ENCODE measurements at regions of chr2 and their contacts with region 1.

Region 1: GRCh38 chr2:20097879-20098714 is 46.7 kb upstream of the LAPTM4A start:
- DNase-seq: peak; percentile 89
- H3K4me3 ChIP-seq: no peak overlapping the region
- H3K27ac ChIP-seq: no peak overlapping the region
- H3K4me1 ChIP-seq: peaks cover 0 to 12% (median 8%) of the 10 kb centered on the region in 4 donors
- H3K27me3 ChIP-seq: no peaks in the 10 kb centered on the region
- CTCF ChIP-seq: peak; percentile 71 to 84 (median 82)
- EP300 ChIP-seq: no peak
- POLR2A ChIP-seq: no peak

Region 2: DNA sequence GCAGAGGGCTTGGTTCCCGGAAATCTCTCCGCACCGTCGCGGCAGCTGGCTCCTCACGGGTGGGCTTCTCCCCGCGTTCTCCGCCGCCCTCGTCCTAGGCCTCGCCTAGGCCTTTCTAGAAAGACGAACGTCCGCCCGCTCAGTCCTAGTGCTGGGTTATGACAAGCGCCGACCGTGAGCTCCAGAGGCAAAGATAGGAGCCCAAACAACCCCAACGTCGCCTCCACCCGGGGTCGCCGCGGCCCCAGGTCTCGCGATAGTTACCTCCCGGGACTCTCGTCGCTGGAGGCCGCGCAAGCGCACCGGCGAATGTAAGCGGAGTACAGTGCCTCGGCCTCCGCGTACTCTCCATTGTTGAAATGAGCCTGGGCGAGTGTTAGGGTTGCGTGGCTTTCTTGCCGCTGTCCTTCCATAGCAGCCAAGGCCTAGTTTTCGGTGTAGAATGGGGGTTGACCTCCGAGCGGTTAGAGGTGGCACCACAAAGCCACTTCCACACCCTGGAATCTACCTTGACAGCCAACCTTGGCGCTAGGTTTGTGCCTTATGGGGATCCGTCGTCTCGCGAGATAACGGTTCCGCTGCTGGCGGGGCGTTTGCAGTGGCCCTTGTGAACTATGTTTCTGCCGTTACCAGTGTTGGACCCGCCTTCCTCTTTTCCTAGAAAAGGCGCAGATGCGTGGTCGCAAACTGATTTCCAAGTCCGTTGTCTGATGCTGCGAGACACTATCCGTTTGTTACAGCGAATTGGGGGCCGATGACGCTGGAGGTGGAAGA is 196.5 kb before region 1 on chr2 and contains the start of gene TTC32:
- intact Hi-C with region 1: loop called (anchors 5 kb)
- DNase-seq: peak; percentile 97
- H3K4me3 ChIP-seq: peak within 1 kb of the TSS; percentile 70 to 98 (median 78)
- H3K27ac ChIP-seq: peak within 1 kb of the TSS; percentile 88 to 95 (median 94)
- H3K4me1 ChIP-seq: peaks cover 0 to 45% (median 42%) of the 10 kb centered on the region in 4 donors
- H3K27me3 ChIP-seq: no peaks in the 10 kb centered on the region
- CTCF ChIP-seq: no peak
- EP300 ChIP-seq: no peak
- POLR2A ChIP-seq: peak; percentile 77 to 82
- total RNA-seq, gene TTC32: 7.3 to 20.5 (median 12.8) TPM

Region 3: GRCh38 chr2:19955544-19956422 is 142.3 kb before region 1 on chr2:
- intact Hi-C with region 1: loop called (anchors 5 kb)
- DNase-seq: no peak
- H3K4me3 ChIP-seq: no peak overlapping the region
- H3K27ac ChIP-seq: no peak overlapping the region
- H3K4me1 ChIP-seq: no peaks in the 10 kb centered on the region
- H3K27me3 ChIP-seq: no peaks in the 10 kb centered on the region
- CTCF ChIP-seq: peak in 3 of 4 experiments; percentile 44 to 72 (median 52)
- EP300 ChIP-seq: no peak
- POLR2A ChIP-seq: no peak

Region 4: GRCh38 chr2:20015472-20016083 is 82.5 kb before region 1 on chr2:
- intact Hi-C with region 1: loop called (anchors 1 kb)
- DNase-seq: no peak
- H3K4me3 ChIP-seq: no peak overlapping the region
- H3K27ac ChIP-seq: no peak overlapping the region
- H3K4me1 ChIP-seq: peaks cover 0 to 17% (median 10%) of the 10 kb centered on the region in 4 donors
- H3K27me3 ChIP-seq: no peaks in the 10 kb centered on the region
- CTCF ChIP-seq: peak; percentile 18 to 59 (median 54)
- EP300 ChIP-seq: no peak
- POLR2A ChIP-seq: no peak

Region 5: DNA sequence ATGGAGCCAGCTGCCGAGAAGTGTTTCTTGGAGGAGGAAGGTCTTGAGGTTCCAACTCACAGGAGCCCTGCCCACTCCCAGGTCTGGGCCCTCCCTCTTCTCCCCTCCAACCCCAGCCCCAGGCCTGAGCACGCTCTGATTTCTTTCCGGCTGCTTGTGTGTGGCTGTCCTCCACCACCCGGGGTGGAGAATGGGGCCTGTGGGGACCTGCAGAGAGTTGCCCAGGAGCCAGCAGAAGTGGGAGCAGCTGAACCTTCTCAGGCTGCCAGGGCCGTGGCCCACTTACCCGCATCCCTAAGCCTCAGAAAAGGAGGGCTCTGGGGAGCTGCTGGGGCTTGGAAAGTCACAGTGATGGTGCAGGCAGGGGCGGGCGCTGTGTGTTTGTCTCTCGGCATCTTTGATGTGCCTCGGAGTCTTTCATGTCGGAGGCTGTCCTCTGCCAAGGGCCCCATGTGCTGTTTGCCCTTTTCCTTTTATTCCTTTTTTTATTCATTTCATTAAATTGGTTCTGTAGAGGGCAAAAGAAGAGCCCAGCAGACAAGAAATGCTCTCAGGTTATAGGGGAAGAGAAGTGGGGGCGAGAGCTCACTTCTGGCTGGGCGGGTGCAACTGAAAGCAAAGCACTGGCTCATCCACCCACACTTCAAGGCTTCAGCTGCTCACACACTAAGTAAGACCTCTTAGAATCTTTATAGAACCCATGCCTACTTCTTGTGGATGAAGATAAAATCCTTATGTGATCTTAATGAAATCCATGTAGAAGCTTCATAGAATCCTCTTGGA is 74.4 kb after region 1 on chr2:
- intact Hi-C with region 1: no loop called
- DNase-seq: no peak
- H3K4me3 ChIP-seq: no peak overlapping the region
- H3K27ac ChIP-seq: no peak overlapping the region
- H3K4me1 ChIP-seq: no peaks in the 10 kb centered on the region
- H3K27me3 ChIP-seq: no peaks in the 10 kb centered on the region
- CTCF ChIP-seq: no peak
- EP300 ChIP-seq: no peak
- POLR2A ChIP-seq: no peak

Region 6: GRCh38 chr2:20185176-20186022 is 87.3 kb after region 1 on chr2:
- intact Hi-C with region 1: no loop called
- DNase-seq: no peak
- H3K4me3 ChIP-seq: no peak overlapping the region
- H3K27ac ChIP-seq: no peak overlapping the region
- H3K4me1 ChIP-seq: no peaks in the 10 kb centered on the region
- H3K27me3 ChIP-seq: no peaks in the 10 kb centered on the region
- CTCF ChIP-seq: no peak
- EP300 ChIP-seq: no peak
- POLR2A ChIP-seq: no peak